ENCODE measurements at regions of chr13 and their contacts with region 1.

Region 1: DNA sequence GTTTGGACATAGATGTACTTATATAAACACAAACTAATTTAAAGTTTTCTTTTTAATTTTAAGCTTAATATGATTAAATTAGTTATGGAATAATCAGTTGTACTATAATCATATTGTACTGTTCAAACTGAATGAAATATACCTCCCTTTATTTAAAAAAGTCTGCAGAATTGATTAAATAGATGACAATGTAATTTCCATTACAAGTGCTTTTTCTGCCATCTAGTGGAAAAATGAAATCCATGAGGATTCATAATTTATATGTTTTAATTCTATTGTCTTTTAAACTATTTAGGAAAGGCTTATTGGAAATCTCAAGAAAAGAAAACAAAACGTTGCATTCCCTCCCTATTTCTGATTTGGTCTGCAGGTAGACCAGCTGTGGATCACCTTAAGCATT is 30.9 kb downstream of the MZT1 start:
- DNase-seq: no peak
- H3K4me3 ChIP-seq: no peak overlapping the region
- H3K27ac ChIP-seq: no peak overlapping the region
- H3K4me1 ChIP-seq: no peaks in the 10 kb centered on the region
- H3K27me3 ChIP-seq: no peaks in the 10 kb centered on the region
- CTCF ChIP-seq: peak; percentile 28 to 38

Region 2: GRCh38 chr13:70960841-70961443 is 1735.6 kb before region 1 on chr13:
- CTCF ChIA-PET with region 1: no interaction called
- dilution Hi-C with region 1: no loop called
- in situ Hi-C with region 1: loop called in 1 of 2 experiments (anchors 25 kb)
- intact Hi-C with region 1: no loop called
- DNase-seq: peak; percentile 5
- H3K4me3 ChIP-seq: no peak overlapping the region
- H3K27ac ChIP-seq: no peak overlapping the region
- H3K4me1 ChIP-seq: no peaks in the 10 kb centered on the region
- H3K27me3 ChIP-seq: no peaks in the 10 kb centered on the region
- CTCF ChIP-seq: peak; percentile 41 to 69

Region 3: DNA sequence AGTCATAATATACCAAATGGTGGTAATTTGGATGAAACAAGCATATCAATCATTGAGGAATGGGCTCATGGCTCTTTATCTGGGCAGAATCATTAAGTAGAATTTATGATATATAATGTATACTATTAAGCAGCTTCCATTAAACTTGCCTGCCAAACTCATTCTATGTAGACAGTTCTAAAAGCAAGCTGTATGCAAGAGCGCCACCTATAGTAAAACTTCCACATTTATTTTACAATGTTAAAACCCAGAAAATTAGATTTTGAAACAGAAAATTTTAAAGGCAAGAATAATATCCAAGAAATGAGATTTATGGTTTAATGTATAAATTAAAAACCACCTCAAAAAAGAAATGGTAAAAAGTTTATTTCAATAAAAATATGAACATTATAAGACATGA is 130.7 kb before region 1 on chr13:
- CTCF ChIA-PET with region 1: no interaction called
- dilution Hi-C with region 1: no loop called
- in situ Hi-C with region 1: no loop called
- intact Hi-C with region 1: loop called (anchors 2 kb)
- DNase-seq: no peak
- H3K4me3 ChIP-seq: no peak overlapping the region
- H3K27ac ChIP-seq: no peak overlapping the region
- H3K4me1 ChIP-seq: no peaks in the 10 kb centered on the region
- H3K27me3 ChIP-seq: no peaks in the 10 kb centered on the region
- CTCF ChIP-seq: peak; percentile 77 to 79

Region 4: GRCh38 chr13:72643311-72643989 is 53.1 kb before region 1 on chr13:
- CTCF ChIA-PET with region 1: no interaction called
- dilution Hi-C with region 1: no loop called
- in situ Hi-C with region 1: no loop called
- intact Hi-C with region 1: loop called (anchors 1 kb)
- DNase-seq: peak; percentile 32
- H3K4me3 ChIP-seq: no peak overlapping the region
- H3K27ac ChIP-seq: no peak overlapping the region
- H3K4me1 ChIP-seq: peaks cover 9% of the 10 kb centered on the region
- H3K27me3 ChIP-seq: no peaks in the 10 kb centered on the region
- CTCF ChIP-seq: peak; percentile 77 to 87

Region 5: GRCh38 chr13:72808917-72809500 is 112.4 kb after region 1 on chr13:
- CTCF ChIA-PET with region 1: no interaction called
- dilution Hi-C with region 1: no loop called
- in situ Hi-C with region 1: no loop called
- intact Hi-C with region 1: no loop called
- DNase-seq: peak; percentile 5
- H3K4me3 ChIP-seq: no peak overlapping the region
- H3K27ac ChIP-seq: no peak overlapping the region
- H3K4me1 ChIP-seq: no peaks in the 10 kb centered on the region
- H3K27me3 ChIP-seq: no peaks in the 10 kb centered on the region
- CTCF ChIP-seq: peak; percentile 40 to 45

Region 6: DNA sequence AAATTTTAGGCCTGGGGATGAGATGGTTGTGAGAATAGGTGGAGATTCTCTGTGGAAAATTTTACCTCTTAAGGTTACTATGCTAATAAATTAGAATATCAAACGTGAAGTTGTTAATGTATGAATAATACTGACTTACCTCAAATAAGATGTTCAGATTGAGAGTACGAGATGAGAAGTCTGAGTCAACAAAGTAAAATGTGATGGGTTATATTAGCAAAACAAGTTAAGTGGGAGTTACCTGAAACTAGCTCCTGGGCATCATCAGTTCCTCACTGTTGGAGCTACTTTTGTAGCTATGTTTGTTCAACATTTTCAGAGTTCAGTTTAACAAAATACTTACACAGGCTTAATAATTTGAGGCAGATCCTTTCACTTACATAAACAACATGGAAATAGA is 194.0 kb after region 1 on chr13:
- CTCF ChIA-PET with region 1: no interaction called
- dilution Hi-C with region 1: no loop called
- in situ Hi-C with region 1: no loop called
- intact Hi-C with region 1: no loop called
- DNase-seq: peak; percentile 67
- H3K4me3 ChIP-seq: no peak overlapping the region
- H3K27ac ChIP-seq: no peak overlapping the region
- H3K4me1 ChIP-seq: no peaks in the 10 kb centered on the region
- H3K27me3 ChIP-seq: no peaks in the 10 kb centered on the region
- CTCF ChIP-seq: no peak

Measured in mammary epithelial cell (primary cell).